Activated CD4-positive, alpha-beta memory T cell treated with anti-CD3 and anti-CD28 coated beads for 36 hours (primary cell): ENCODE measurements at regions of chr12 and their contacts with region 1.

Region 1: GRCh38 chr12:120580787-120581723 is at the start of gene POP5:
- DNase-seq: peak; percentile 97
- H3K4me3 Mint-ChIP-seq: peak within 1 kb of the TSS; percentile 96
- H3K27ac Mint-ChIP-seq: peak within 1 kb of the TSS; percentile 86
- H3K4me1 Mint-ChIP-seq: peaks cover 33% of the 10 kb centered on the region
- H3K27me3 Mint-ChIP-seq: no peaks in the 10 kb centered on the region
- total RNA-seq, gene POP5: 54.1 to 55.7 TPM

Region 2: GRCh38 chr12:120327593-120327992 is 253.5 kb before region 1 on chr12 and contains the start of gene PLA2G1B:
- CTCF ChIA-PET with region 1: interaction called, 4 read pairs
- POLR2A ChIA-PET with region 1: no interaction called
- intact Hi-C with region 1: loop called (anchors 2 kb)
- DNase-seq: no peak
- H3K4me3 Mint-ChIP-seq: no peak within 1 kb of the TSS
- H3K27ac Mint-ChIP-seq: no peak within 1 kb of the TSS
- H3K4me1 Mint-ChIP-seq: peaks cover 2% of the 10 kb centered on the region
- H3K27me3 Mint-ChIP-seq: peaks cover 2% of the 10 kb centered on the region
- total RNA-seq, gene PLA2G1B: not detected

Region 3: DNA sequence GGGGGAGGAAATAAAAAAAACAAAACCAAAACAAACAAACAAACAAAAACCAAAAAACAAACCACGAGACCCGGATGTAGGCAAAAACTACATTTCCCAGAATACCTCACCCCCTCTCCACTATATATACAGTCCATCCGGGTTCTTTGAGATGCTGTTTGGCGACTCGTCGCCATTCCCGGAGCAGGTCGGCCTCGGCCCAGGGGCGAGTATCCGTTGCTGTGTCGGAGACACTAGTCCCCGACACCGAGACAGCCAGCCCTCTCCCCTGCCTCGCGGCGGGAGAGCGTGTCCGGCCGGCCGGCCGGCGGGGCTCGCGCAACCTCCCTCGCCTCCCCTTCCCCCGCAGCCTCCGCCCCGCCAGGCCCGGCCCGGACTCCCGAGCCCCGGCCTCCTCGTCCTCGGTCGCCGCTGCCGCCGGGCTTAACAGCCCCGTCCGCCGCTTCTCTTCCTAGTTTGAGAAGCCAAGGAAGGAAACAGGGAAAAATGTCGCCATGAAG is 46.8 kb before region 1 on chr12 and contains the start of gene RNF10:
- CTCF ChIA-PET with region 1: interaction called, 4 read pairs
- POLR2A ChIA-PET with region 1: interaction called, 11 read pairs
- intact Hi-C with region 1: loop called (anchors 2 kb)
- DNase-seq: peak; percentile 80
- H3K4me3 Mint-ChIP-seq: peak within 1 kb of the TSS; percentile 97
- H3K27ac Mint-ChIP-seq: peak within 1 kb of the TSS; percentile 96
- H3K4me1 Mint-ChIP-seq: peaks cover 43% of the 10 kb centered on the region
- H3K27me3 Mint-ChIP-seq: no peaks in the 10 kb centered on the region
- total RNA-seq, gene RNF10: 188 to 210 TPM

Region 4: DNA sequence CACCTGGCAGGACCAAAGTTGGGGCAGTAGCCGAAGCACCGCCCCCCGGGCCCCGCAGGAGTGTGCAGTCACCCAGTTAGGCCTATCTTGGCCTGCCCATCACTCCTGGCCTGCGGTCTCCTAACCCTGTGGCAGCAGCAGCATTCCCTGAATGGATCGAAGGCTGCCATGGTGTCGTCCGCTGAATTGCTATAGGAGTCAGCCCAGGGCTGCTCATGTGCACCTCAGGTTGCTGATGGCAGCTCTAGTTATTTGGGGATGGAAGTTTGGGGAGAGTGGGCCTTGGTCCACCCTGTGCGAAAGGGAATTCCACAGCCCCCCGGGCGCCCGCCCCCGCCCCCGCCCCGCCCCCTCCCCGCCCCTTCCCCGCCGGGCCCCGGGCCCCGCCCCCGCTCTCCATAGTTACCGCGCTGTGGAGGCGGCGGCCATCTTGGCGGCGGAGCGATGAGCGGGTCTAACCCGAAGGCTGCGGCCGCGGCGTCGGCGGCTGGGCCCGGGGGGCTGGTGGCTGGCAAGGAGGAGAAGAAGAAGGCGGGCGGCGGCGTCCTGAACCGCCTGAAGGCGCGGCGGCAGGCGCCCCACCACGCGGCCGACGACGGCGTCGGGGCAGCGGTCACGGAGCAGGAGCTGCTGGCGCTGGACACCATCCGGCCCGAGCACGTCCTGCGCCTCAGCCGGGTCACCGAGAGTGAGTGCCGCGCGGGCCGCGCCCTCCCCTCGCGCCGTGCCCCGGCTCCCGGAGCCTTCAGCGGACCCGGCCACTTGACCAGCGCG is 129.2 kb after region 1 on chr12 and contains the start of gene UNC119B:
- CTCF ChIA-PET with region 1: interaction called, 20 read pairs
- POLR2A ChIA-PET with region 1: no interaction called
- intact Hi-C with region 1: loop called (anchors 1 kb)
- DNase-seq: peak; percentile 78
- H3K4me3 Mint-ChIP-seq: peak within 1 kb of the TSS; percentile 84
- H3K27ac Mint-ChIP-seq: peak within 1 kb of the TSS; percentile 67
- H3K4me1 Mint-ChIP-seq: peaks cover 33% of the 10 kb centered on the region
- H3K27me3 Mint-ChIP-seq: no peaks in the 10 kb centered on the region
- total RNA-seq, gene UNC119B: 28.2 to 31.3 TPM

Region 5: GRCh38 chr12:120783197-120783596 is 202.1 kb after region 1 on chr12:
- CTCF ChIA-PET with region 1: no interaction called
- POLR2A ChIA-PET with region 1: no interaction called
- intact Hi-C with region 1: no loop called
- DNase-seq: peak; percentile 49
- H3K4me3 Mint-ChIP-seq: peak overlapping the region; percentile 7
- H3K27ac Mint-ChIP-seq: peak overlapping the region; percentile 60
- H3K4me1 Mint-ChIP-seq: peaks cover 35% of the 10 kb centered on the region
- H3K27me3 Mint-ChIP-seq: no peaks in the 10 kb centered on the region

Region 6: GRCh38 chr12:120971299-120972179 is 390.5 kb after region 1 on chr12:
- CTCF ChIA-PET with region 1: interaction called, 32 read pairs
- POLR2A ChIA-PET with region 1: no interaction called
- intact Hi-C with region 1: loop called (anchors 2 kb)
- DNase-seq: peak; percentile 32
- H3K4me3 Mint-ChIP-seq: no peak overlapping the region
- H3K27ac Mint-ChIP-seq: no peak overlapping the region
- H3K4me1 Mint-ChIP-seq: peaks cover 4% of the 10 kb centered on the region
- H3K27me3 Mint-ChIP-seq: no peaks in the 10 kb centered on the region

Region 7: DNA sequence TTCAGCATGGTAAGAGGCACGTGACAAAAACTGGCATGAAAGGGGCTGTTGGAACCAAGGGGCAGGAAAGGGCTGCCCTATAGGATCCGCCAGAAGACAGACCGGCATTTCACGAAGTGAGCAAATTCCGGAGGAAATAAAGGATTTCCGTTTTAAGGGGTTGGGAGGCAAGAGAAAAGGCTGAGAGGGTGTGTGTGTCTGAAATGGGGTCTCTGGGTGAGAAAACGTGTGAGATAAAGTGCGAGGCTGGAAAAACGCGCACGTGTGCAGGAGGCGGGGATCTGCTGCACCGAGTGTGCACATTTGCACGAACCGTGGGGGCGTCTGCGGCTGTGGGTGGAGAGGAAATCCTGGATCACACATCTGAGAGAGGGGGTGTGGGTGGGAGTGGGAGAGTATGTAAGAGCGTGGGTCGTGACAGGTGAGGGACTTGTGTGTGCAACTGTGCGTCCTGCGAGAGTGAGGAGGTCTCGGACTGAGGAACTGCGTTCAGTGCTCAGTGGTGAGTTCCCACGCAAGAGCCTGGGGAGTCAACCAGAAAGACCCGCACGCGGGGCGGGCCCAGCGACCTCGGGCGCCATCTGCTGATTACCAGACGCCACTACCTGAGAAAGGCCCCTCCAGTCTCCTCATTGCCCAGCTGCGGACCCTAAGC is 514.6 kb after region 1 on chr12:
- CTCF ChIA-PET with region 1: interaction called, 7 read pairs
- POLR2A ChIA-PET with region 1: no interaction called
- intact Hi-C with region 1: loop called (anchors 10 kb)
- DNase-seq: peak; percentile 87
- H3K4me3 Mint-ChIP-seq: peak overlapping the region; percentile 68
- H3K27ac Mint-ChIP-seq: no peak overlapping the region
- H3K4me1 Mint-ChIP-seq: peaks cover 35% of the 10 kb centered on the region
- H3K27me3 Mint-ChIP-seq: peaks cover 1% of the 10 kb centered on the region